H1 (cell line): ENCODE measurements at regions of chr17 and their contacts with region 1.

Region 1: GRCh38 chr17:76681222-76682137 is 29.3 kb downstream of the MXRA7 start:
- DNase-seq: peak; percentile 62 to 90
- H3K4me3 ChIP-seq: no peak overlapping the region
- H3K27ac ChIP-seq: no peak overlapping the region
- H3K4me1 ChIP-seq: peaks cover 0 to 19% (median 10%) of the 10 kb centered on the region in 4 experiments; a peak in 5 of 7 replicates
- H3K27me3 ChIP-seq: no peaks in the 10 kb centered on the region
- CTCF ChIP-seq: peak; percentile 92 to 95 (median 94)
- EP300 ChIP-seq: no peak
- POLR2A ChIP-seq: no peak
- RAD21 ChIP-seq: peak; percentile 84 to 91

Region 2: DNA sequence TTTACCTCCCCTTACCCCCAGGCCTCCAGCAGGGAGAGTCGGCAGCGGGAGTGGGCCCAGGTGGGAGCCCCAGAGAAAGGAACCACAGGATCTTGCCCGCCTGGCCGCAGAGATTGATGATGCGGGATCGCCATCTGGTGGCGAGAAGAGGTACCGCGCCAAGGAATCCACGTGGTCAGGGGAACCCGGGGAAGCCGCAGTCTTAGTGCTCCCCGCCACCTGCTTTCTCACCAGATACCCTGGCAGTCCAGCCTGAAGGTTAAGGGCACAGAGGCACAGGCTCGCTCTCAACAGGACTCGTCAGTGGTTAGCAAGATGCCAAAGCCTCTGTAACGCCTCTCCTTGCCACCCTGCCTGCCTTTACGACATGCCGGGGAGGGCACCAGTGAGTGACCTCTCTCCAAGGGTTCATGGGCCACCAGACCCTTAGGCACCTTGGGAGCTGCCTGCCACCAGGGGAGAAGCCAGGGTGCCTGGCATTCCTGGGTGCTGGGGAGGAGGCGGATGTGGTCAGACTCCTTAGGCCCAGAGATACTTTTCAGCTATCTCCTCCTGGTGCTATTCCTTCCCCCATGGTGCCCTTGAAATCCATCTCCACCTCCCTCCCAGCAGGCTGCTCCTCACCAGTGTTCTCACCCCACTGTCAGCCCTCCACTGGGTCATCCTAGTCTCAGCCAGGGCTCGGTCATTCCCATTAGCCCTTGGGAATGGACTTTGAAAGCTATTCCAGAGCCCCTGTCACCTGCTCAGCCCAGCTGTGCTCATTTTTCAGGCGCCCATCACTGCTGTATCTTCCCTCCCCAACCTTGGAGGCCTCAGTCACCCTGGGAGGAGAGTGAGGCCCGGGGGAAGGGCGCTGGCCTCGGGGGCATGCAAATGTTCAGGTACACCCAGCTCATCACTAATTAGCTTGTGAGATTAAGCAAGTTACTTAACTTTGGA is 174.8 kb before region 1 on chr17:
- CTCF ChIA-PET with region 1: interaction called, 20 read pairs
- POLR2A ChIA-PET with region 1: no interaction called
- DNase-seq: peak; percentile 56 to 99
- H3K4me3 ChIP-seq: peak overlapping the region in 1 of 4 experiments; percentile 40; a peak in 2 of 8 replicates
- H3K27ac ChIP-seq: no peak overlapping the region
- H3K4me1 ChIP-seq: peaks cover 4 to 9% (median 6%) of the 10 kb centered on the region in 4 experiments
- H3K27me3 ChIP-seq: peaks cover 0 to 6% (median 4%) of the 10 kb centered on the region in 4 experiments; a peak in 5 of 7 replicates
- CTCF ChIP-seq: peak; percentile 92 to 98 (median 93)
- EP300 ChIP-seq: no peak
- POLR2A ChIP-seq: no peak
- RAD21 ChIP-seq: peak; percentile 96 to 97

Region 3: DNA sequence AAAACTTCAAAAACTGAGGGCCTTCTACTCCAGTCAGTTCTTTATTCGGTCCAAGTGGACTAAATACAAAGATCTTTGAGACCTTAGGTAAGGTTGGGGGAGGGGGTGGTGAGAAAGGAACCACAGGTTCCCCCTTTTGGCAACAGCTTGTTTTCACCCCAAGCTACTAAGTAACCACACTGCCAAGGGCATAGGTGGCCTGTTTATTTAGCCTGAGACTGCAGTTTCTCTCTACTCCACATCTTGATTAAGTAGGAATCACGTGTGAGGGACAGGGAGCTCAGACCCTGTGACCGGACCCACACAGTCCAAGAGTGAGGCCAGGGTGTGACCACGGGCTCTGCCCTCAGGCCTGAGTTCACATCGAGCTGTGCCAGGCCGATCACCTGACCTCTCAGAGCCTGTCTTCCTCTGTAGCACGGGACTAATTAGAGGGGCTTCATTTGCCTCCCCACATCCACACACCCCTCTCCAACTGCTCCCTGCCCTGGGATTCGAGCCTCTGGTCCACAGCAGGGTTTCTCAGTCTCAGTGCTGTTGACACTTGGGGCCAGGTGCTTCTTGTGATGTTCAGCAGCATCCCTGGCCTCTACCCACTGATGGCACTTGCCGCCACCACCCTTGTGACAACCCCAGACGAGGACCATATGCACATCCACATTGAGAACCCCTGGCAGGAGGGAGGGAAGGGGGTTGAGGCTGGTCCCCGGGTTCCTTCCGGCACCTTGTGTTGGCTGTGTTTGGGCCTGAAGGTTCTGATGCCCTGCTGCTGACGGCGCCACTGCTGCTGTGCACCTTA is 113.6 kb before region 1 on chr17:
- CTCF ChIA-PET with region 1: interaction called, 25 read pairs
- POLR2A ChIA-PET with region 1: interaction called, 5 read pairs
- DNase-seq: no peak
- H3K4me3 ChIP-seq: no peak overlapping the region
- H3K27ac ChIP-seq: no peak overlapping the region
- H3K4me1 ChIP-seq: peaks cover 0 to 21% (median 5%) of the 10 kb centered on the region in 4 experiments; a peak in 6 of 7 replicates
- H3K27me3 ChIP-seq: no peaks in the 10 kb centered on the region; a peak in 2 of 7 replicates
- CTCF ChIP-seq: no peak
- EP300 ChIP-seq: no peak
- POLR2A ChIP-seq: peak in 1 of 2 experiments; percentile 49; a peak in 1 of 3 replicates
- RAD21 ChIP-seq: no peak

Region 4: GRCh38 chr17:76623271-76624146 is 58.0 kb before region 1 on chr17:
- CTCF ChIA-PET with region 1: interaction called, 58 read pairs
- POLR2A ChIA-PET with region 1: interaction called, 3 read pairs
- DNase-seq: peak in 1 of 2 experiments; percentile 93
- H3K4me3 ChIP-seq: no peak overlapping the region
- H3K27ac ChIP-seq: no peak overlapping the region
- H3K4me1 ChIP-seq: no peaks in the 10 kb centered on the region
- H3K27me3 ChIP-seq: no peaks in the 10 kb centered on the region; a peak in 2 of 7 replicates
- CTCF ChIP-seq: peak; percentile 81 to 94 (median 85)
- EP300 ChIP-seq: no peak
- POLR2A ChIP-seq: no peak
- RAD21 ChIP-seq: peak; percentile 83 to 85

Region 5: DNA sequence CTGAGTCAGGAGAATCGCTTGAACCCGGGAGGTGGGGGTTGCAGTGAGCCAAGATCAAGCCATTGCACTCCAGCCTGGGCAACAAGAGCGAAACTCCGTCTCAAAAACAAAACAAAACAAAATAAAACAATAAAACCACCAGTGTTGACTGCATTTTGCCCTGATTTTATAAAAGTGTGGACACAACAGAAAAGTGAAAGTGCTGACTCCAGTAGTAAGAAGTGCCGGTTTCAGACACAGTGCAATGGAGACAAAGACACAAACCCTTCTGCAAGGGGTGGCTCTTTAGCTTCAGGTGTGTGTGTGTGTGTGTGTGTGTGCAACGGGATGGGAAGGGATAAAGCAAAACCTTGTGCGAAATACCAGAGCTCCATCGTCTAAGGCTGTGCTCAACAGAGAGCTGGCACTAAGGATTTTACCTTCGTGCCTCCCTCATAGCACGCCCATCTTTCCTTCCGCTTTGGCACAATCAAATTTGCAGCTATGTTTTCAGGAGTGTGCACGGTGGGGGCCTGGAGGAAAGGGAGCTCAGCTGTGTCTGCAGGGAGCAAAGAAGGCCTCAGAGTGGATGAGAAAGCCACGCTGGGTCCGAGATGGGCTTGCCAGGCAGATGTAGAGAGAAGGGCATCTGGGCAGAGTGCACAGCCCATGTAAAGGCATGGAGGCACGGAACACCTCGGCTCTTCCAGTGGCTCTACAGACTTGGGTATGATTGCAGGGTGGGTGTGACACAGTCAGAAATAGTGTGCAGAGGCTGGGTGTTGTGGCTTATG is 13.8 kb after region 1 on chr17:
- CTCF ChIA-PET with region 1: interaction called, 33 read pairs
- POLR2A ChIA-PET with region 1: interaction called, 4 read pairs
- DNase-seq: no peak
- H3K4me3 ChIP-seq: no peak overlapping the region
- H3K27ac ChIP-seq: no peak overlapping the region
- H3K4me1 ChIP-seq: peaks cover 0 to 14% (median 10%) of the 10 kb centered on the region in 4 experiments; a peak in 6 of 7 replicates
- H3K27me3 ChIP-seq: no peaks in the 10 kb centered on the region; a peak in 1 of 7 replicates
- CTCF ChIP-seq: no peak
- EP300 ChIP-seq: no peak
- POLR2A ChIP-seq: no peak
- RAD21 ChIP-seq: no peak

Region 6: DNA sequence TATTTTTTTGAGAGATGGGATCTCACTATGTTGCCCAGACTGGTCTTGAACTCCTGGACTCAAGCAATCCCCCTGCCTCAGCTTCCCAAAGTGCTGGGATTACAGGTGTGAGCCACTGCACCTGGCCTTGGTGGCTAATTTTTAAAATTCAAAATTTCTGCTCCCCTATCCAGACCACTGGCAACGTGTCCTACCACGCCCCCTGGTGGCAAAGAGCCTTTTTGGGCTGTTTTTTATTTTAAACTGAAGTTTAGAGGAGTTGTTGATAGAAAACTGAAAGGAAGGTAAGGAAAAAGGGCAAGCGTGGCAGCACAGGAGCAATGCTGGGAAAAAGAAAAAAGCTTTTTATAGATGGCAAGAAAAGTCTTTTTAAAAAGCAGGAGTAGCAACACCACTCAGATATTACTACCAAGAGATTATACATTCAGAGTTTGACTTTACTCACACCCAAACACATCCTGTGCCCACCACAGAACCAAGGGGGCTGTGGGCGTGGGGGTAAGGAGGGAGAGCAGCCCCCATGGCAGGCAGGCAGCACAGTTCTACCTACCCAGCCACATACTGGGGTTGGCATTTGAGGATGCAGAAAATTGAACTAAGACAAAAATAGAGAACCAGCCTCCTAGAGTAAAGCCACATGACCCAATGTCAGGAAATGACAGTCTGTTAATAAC is 33.5 kb after region 1 on chr17:
- CTCF ChIA-PET with region 1: interaction called, 155 read pairs
- POLR2A ChIA-PET with region 1: no interaction called
- DNase-seq: peak in 1 of 2 experiments; percentile 92
- H3K4me3 ChIP-seq: no peak overlapping the region
- H3K27ac ChIP-seq: no peak overlapping the region
- H3K4me1 ChIP-seq: peaks cover 2 to 7% (median 5%) of the 10 kb centered on the region in 4 experiments; a peak in 5 of 7 replicates
- H3K27me3 ChIP-seq: peaks cover 0 to 3% (median 2%) of the 10 kb centered on the region in 4 experiments; a peak in 5 of 7 replicates
- CTCF ChIP-seq: peak; percentile 53 to 80 (median 70)
- EP300 ChIP-seq: no peak
- POLR2A ChIP-seq: no peak
- RAD21 ChIP-seq: peak; percentile 55 to 69

Region 7: GRCh38 chr17:76843703-76844484 is 162.4 kb after region 1 on chr17:
- CTCF ChIA-PET with region 1: no interaction called
- POLR2A ChIA-PET with region 1: no interaction called
- DNase-seq: no peak
- H3K4me3 ChIP-seq: no peak overlapping the region
- H3K27ac ChIP-seq: no peak overlapping the region
- H3K4me1 ChIP-seq: peaks cover 3 to 23% (median 9%) of the 10 kb centered on the region in 4 experiments
- H3K27me3 ChIP-seq: peaks cover 0 to 12% (median 10%) of the 10 kb centered on the region in 4 experiments; a peak in 5 of 7 replicates
- CTCF ChIP-seq: peak in 2 of 3 experiments; percentile 10 to 28; a peak in 2 of 4 replicates
- EP300 ChIP-seq: no peak
- POLR2A ChIP-seq: no peak
- RAD21 ChIP-seq: peak in 1 of 2 experiments; percentile 15; a peak in 1 of 4 replicates